ENCODE measurements at regions of chr10 and their contacts with region 1.

Region 1: DNA sequence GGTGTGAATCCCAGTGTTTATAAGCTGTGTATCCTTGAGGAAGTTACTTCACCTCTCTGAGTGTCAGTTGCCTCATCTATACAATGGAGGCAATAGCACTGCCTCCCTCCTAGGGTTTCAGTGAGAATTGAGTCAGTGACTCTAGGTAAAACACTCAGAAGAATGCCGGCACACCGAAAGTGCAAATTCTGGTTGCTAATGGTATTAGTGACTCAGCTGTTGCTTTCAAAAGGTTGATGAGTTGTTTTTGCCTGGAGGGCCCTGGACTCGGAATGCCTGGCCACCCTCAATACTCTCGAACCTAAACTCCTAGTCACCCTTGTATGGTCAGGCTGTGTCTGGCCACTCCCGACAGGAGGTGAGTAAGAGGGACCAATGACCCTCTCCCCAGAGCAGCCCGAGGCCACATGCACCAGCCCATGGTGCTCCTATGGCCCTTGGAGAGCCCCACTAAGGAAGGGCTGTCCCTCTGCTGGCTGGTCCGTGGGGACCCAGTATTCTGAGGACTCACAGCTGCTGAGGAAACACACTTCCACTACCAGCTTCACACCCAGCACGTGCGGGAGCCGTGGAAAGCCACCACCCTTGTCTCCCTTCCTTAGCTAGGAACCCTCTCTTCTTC is 60.2 kb downstream of the CALML3 start:
- DNase-seq: peak; percentile 31
- ATAC-seq: peak; percentile 83
- H3K4me3 Mint-ChIP-seq: no peak overlapping the region
- H3K27ac Mint-ChIP-seq: no peak overlapping the region
- H3K4me1 Mint-ChIP-seq: peaks cover 4% of the 10 kb centered on the region
- H3K27me3 Mint-ChIP-seq: no peaks in the 10 kb centered on the region

Region 2: DNA sequence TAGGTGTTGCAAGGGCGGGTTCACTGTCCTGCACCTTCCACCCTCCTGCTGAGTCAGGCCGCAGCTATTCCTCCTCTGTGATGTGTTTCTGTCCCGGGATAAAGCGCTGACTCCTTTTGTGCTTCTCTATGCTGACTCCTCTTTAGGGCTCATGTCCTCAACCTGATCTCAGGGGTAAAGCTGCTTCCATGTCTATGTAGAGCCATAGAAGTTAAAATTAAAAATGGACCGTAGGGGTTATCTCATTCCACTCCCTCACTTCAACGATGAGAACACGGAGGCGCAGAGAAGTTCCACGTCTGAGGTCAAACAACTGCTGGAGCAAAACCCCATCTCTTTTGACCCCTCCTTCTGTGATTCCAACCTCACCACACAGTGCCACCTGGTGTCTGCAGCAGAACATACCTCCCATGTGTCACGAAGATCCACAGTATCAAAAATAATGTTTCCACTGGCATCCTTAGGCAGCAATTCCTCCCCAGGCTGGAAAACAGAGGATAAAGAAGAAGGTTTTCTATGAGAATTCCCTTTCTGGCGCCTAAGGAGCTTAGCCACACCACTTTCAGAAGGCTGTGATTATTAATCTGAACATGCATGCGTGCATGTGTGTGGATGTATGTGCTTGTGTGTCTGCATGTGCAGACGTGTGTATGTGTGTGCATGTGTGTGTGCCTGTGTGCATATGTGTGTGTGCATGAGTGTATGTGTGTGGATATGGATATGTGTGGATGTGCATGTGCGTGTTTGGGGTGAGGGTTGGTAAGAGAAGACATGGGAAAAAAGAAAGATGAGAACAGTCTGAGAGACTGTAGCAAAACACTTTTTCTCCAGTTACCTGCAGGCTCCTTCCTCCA is 301.5 kb before region 1 on chr10:
- CTCF ChIA-PET with region 1: no interaction called
- POLR2A ChIA-PET with region 1: no interaction called
- intact Hi-C with region 1: no loop called
- DNase-seq: peak; percentile 78
- ATAC-seq: peak; percentile 83
- H3K4me3 Mint-ChIP-seq: no peak overlapping the region
- H3K27ac Mint-ChIP-seq: peak overlapping the region; percentile 74
- H3K4me1 Mint-ChIP-seq: peaks cover 21% of the 10 kb centered on the region
- H3K27me3 Mint-ChIP-seq: peaks cover 7% of the 10 kb centered on the region

Region 3: GRCh38 chr10:5512881-5513612 is 72.0 kb before region 1 on chr10:
- CTCF ChIA-PET with region 1: no interaction called
- POLR2A ChIA-PET with region 1: no interaction called
- intact Hi-C with region 1: loop called in 1 of 2 experiments (anchors 5 kb)
- DNase-seq: peak; percentile 59
- ATAC-seq: peak; percentile 49
- H3K4me3 Mint-ChIP-seq: no peak overlapping the region
- H3K27ac Mint-ChIP-seq: no peak overlapping the region
- H3K4me1 Mint-ChIP-seq: peaks cover 13% of the 10 kb centered on the region
- H3K27me3 Mint-ChIP-seq: peaks cover 2% of the 10 kb centered on the region

Region 4: GRCh38 chr10:6275022-6275997 is 690.3 kb after region 1 on chr10:
- CTCF ChIA-PET with region 1: no interaction called
- POLR2A ChIA-PET with region 1: no interaction called
- intact Hi-C with region 1: no loop called
- DNase-seq: peak; percentile 97
- ATAC-seq: peak; percentile 91
- H3K4me3 Mint-ChIP-seq: peak overlapping the region; percentile 70
- H3K27ac Mint-ChIP-seq: peak overlapping the region; percentile 97
- H3K4me1 Mint-ChIP-seq: peaks cover 69% of the 10 kb centered on the region
- H3K27me3 Mint-ChIP-seq: no peaks in the 10 kb centered on the region

Measured in activated CD4-positive, alpha-beta T cell treated with anti-CD3 and anti-CD28 coated beads for 36 hours (primary cell).